ENCODE measurements at regions of chr11 and their contacts with region 1.

Region 1: DNA sequence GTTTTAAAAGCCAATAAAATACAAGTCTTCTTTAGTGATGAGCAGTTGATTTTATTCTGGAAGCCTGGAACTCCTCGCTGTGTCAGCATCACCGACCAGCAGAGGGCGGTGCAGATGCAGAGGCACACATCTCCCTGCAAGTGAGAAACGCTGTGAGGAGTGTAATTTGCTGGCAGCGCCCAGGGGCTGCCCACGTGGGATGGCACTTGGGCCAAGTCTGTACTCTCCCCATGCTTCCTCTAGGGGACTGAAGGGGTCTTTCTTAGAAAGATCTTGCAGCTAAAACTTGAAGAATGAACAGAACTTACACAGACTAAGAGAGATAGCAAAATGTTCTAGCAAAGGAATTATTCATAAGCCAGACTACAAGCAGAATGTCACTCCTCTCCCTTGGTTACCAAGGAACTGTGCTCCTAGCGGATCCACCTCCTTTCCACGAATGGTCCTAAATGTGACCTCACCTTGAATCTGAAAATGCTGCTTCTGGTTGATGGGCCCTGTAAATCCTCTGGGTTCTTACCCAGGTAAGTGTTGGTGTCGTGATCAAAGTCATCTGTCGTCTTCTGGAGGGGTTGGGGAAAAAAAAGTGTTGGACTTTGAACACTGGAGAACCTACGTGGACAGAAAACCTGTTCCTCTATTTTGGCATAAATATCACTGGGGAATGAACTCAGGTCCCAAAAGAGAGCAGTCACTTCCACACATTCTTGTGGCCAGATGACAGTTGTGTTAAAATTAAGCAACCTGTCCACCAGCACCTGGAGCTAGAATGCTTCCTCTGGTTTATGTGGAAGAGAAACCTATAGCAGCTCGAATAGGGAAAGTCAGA is 31.8 kb downstream of the CNTF start:
- DNase-seq: peak; percentile 85
- H3K4me3 Mint-ChIP-seq: no peak overlapping the region
- H3K27ac Mint-ChIP-seq: no peak overlapping the region
- H3K4me1 Mint-ChIP-seq: peaks cover 18% of the 10 kb centered on the region
- H3K27me3 Mint-ChIP-seq: peaks cover 1% of the 10 kb centered on the region

Region 2: GRCh38 chr11:58567889-58568512 is 86.3 kb before region 1 on chr11:
- CTCF ChIA-PET with region 1: interaction called, 12 read pairs
- POLR2A ChIA-PET with region 1: no interaction called
- intact Hi-C with region 1: no loop called
- DNase-seq: peak; percentile 84
- H3K4me3 Mint-ChIP-seq: no peak overlapping the region
- H3K27ac Mint-ChIP-seq: peak overlapping the region; percentile 71
- H3K4me1 Mint-ChIP-seq: peaks cover 60% of the 10 kb centered on the region
- H3K27me3 Mint-ChIP-seq: no peaks in the 10 kb centered on the region

Region 3: GRCh38 chr11:58629857-58630256 is 24.4 kb before region 1 on chr11:
- CTCF ChIA-PET with region 1: interaction called, 10 read pairs
- POLR2A ChIA-PET with region 1: no interaction called
- intact Hi-C with region 1: no loop called
- DNase-seq: peak; percentile 24
- H3K4me3 Mint-ChIP-seq: no peak overlapping the region
- H3K27ac Mint-ChIP-seq: no peak overlapping the region
- H3K4me1 Mint-ChIP-seq: peaks cover 7% of the 10 kb centered on the region
- H3K27me3 Mint-ChIP-seq: no peaks in the 10 kb centered on the region

Region 4: GRCh38 chr11:58788355-58789023 is 134.2 kb after region 1 on chr11:
- CTCF ChIA-PET with region 1: interaction called, 26 read pairs
- POLR2A ChIA-PET with region 1: no interaction called
- intact Hi-C with region 1: loop called (anchors 1 kb)
- DNase-seq: peak; percentile 56
- H3K4me3 Mint-ChIP-seq: no peak overlapping the region
- H3K27ac Mint-ChIP-seq: no peak overlapping the region
- H3K4me1 Mint-ChIP-seq: no peaks in the 10 kb centered on the region
- H3K27me3 Mint-ChIP-seq: peaks cover 3% of the 10 kb centered on the region

Region 5: DNA sequence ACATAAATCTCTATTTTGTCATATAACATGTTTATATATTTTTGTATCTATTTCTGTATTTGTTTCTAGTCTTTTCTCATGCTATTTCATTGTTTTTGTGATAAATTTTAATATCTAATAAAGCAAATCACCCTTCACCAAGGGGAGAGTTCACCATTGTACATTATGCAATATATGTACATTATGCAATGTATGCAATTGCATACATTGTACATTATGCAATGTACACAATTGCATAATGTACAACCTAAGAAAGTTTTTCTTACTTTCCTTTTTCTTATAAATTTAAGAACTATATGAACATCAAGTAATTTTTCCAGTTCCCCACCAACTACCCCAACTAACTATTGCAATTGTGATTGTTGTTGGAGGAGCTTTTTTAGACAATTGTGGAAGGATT is 234.3 kb after region 1 on chr11:
- CTCF ChIA-PET with region 1: no interaction called
- POLR2A ChIA-PET with region 1: no interaction called
- intact Hi-C with region 1: no loop called
- DNase-seq: no peak
- H3K4me3 Mint-ChIP-seq: no peak overlapping the region
- H3K27ac Mint-ChIP-seq: no peak overlapping the region
- H3K4me1 Mint-ChIP-seq: no peaks in the 10 kb centered on the region
- H3K27me3 Mint-ChIP-seq: peaks cover 16% of the 10 kb centered on the region

Region 6: GRCh38 chr11:59053387-59053786 is 399.1 kb after region 1 on chr11:
- CTCF ChIA-PET with region 1: interaction called, 14 read pairs
- POLR2A ChIA-PET with region 1: no interaction called
- intact Hi-C with region 1: no loop called
- DNase-seq: peak; percentile 86
- H3K4me3 Mint-ChIP-seq: no peak overlapping the region
- H3K27ac Mint-ChIP-seq: no peak overlapping the region
- H3K4me1 Mint-ChIP-seq: peaks cover 4% of the 10 kb centered on the region
- H3K27me3 Mint-ChIP-seq: peaks cover 17% of the 10 kb centered on the region

Measured in activated CD4-positive, alpha-beta memory T cell treated with anti-CD3 and anti-CD28 coated beads for 36 hours (primary cell).